ENCODE measurements at regions of chr9 and their contacts with region 1.

Region 1: GRCh38 chr9:111828193-111828592 is 33.5 kb upstream of the SHOC1 start:
- DNase-seq: peak in 4 of 5 donors; percentile 14 to 31 (median 24)
- H3K4me3 ChIP-seq: no peak overlapping the region
- H3K4me3 Mint-ChIP-seq: no peak overlapping the region
- H3K27ac ChIP-seq: no peak overlapping the region
- H3K27ac Mint-ChIP-seq: peak overlapping the region in 1 of 7 donors; percentile 32
- H3K4me1 ChIP-seq: no peaks in the 10 kb centered on the region
- H3K4me1 Mint-ChIP-seq: peaks cover 0 to 1% (median 0%) of the 10 kb centered on the region in 4 donors
- H3K27me3 ChIP-seq: no peaks in the 10 kb centered on the region
- H3K27me3 Mint-ChIP-seq: no peaks in the 10 kb centered on the region

Region 2: DNA sequence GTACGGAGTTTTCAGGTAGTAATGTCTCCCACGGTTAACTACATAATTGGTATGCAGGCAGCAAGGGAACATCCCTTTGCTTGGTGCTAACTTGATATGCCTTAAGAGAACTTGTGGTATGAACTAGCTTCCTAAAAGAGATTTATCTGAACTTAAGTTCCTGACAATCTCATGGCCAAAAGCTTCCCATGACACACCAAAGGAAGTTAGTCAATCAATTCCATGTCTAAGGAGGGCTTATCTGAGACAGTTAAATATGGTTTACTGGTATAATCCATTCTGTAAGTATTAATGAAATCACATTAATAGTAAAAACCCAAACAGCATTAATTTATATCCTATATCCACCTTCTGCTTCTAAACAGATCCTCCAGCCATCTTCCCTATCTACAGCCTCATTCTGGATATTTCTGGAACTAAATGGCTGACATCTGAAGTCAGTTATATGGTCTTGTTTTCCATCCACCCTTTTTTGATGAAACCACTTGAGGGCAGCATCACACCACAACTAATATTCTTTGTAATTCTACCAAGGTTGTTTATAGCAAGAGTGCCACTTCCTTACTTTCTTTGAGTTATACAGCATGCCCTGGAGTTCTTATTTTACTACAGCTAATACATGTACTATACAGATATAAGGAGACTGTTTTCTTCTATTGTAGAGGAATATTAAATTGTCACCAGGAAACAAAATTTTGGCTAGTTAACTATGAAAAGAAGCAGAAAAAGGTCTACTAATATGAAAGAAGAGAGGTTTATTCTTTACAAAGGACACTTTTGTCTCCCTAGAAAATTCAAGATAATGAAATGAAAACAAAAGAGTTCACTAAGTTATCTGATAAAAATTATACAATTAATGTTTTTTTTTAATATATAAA is 68.2 kb before region 1 on chr9:
- CTCF ChIA-PET with region 1: interaction called, 4 read pairs
- POLR2A ChIA-PET with region 1: no interaction called
- intact Hi-C with region 1: loop called (anchors 1 kb)
- DNase-seq: peak; percentile 56 to 70 (median 68)
- H3K4me3 ChIP-seq: no peak overlapping the region
- H3K4me3 Mint-ChIP-seq: no peak overlapping the region
- H3K27ac ChIP-seq: no peak overlapping the region
- H3K27ac Mint-ChIP-seq: no peak overlapping the region
- H3K4me1 ChIP-seq: no peaks in the 10 kb centered on the region
- H3K4me1 Mint-ChIP-seq: peaks cover 0 to 4% (median 2%) of the 10 kb centered on the region in 4 donors
- H3K27me3 ChIP-seq: no peaks in the 10 kb centered on the region
- H3K27me3 Mint-ChIP-seq: no peaks in the 10 kb centered on the region

Region 3: GRCh38 chr9:111897601-111898137 is 69.5 kb after region 1 on chr9:
- CTCF ChIA-PET with region 1: no interaction called
- POLR2A ChIA-PET with region 1: no interaction called
- intact Hi-C with region 1: no loop called
- DNase-seq: peak in 3 of 5 donors; percentile 15 to 29 (median 28)
- H3K4me3 ChIP-seq: peak overlapping the region; percentile 87 to 97
- H3K4me3 Mint-ChIP-seq: no peak overlapping the region
- H3K27ac ChIP-seq: peak overlapping the region; percentile 70
- H3K27ac Mint-ChIP-seq: no peak overlapping the region
- H3K4me1 ChIP-seq: peaks cover 58% of the 10 kb centered on the region
- H3K4me1 Mint-ChIP-seq: peaks cover 14 to 22% (median 21%) of the 10 kb centered on the region in 4 donors
- H3K27me3 ChIP-seq: no peaks in the 10 kb centered on the region
- H3K27me3 Mint-ChIP-seq: no peaks in the 10 kb centered on the region

Region 4: DNA sequence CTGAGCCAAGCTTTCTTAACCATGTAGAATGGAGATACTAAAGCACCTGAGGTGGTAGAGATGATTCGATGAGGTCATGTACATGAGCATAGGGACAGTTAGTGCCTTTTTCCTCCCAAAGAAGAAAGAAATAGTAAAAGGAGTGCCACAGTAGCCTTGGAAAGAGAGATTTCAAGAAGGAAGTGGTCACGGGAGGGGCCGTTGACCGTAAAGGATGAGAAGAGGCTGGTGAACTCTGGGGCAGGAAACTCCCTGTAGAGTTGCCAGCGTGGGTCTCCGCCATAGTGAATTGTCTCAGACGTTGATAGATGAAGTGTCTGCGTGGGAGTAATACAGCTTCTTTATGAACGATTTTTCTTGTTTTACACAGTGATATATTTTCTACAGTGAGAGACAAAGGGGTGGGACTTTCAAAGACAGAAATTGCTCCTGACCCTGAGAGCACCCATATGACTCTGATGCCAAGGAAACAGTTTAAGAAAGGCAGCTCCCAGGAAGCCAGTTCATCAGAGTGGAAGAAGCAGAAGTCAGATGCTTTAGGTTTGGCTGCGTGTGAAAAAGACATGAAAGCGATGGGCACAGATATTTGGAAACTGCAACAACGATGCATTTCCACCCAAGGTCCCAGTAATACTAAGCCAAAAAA is 109.7 kb after region 1 on chr9:
- CTCF ChIA-PET with region 1: no interaction called
- POLR2A ChIA-PET with region 1: no interaction called
- intact Hi-C with region 1: no loop called
- DNase-seq: peak; percentile 56 to 79 (median 60)
- H3K4me3 ChIP-seq: peak overlapping the region in 1 of 2 donors; percentile 42
- H3K4me3 Mint-ChIP-seq: peak overlapping the region; percentile 57 to 93 (median 82)
- H3K27ac ChIP-seq: peak overlapping the region; percentile 39
- H3K27ac Mint-ChIP-seq: peak overlapping the region; percentile 74 to 97 (median 96)
- H3K4me1 ChIP-seq: peaks cover 31% of the 10 kb centered on the region
- H3K4me1 Mint-ChIP-seq: peaks cover 25 to 41% (median 33%) of the 10 kb centered on the region in 4 donors
- H3K27me3 ChIP-seq: no peaks in the 10 kb centered on the region
- H3K27me3 Mint-ChIP-seq: no peaks in the 10 kb centered on the region

Region 5: GRCh38 chr9:111975709-111976108 is 147.5 kb after region 1 on chr9:
- CTCF ChIA-PET with region 1: interaction called, 3 read pairs
- POLR2A ChIA-PET with region 1: no interaction called
- intact Hi-C with region 1: loop called (anchors 1 kb)
- DNase-seq: no peak
- H3K4me3 ChIP-seq: no peak overlapping the region
- H3K4me3 Mint-ChIP-seq: no peak overlapping the region
- H3K27ac ChIP-seq: no peak overlapping the region
- H3K27ac Mint-ChIP-seq: peak overlapping the region in 1 of 7 donors; percentile 52
- H3K4me1 ChIP-seq: no peaks in the 10 kb centered on the region
- H3K4me1 Mint-ChIP-seq: peaks cover 0 to 10% (median 6%) of the 10 kb centered on the region in 4 donors
- H3K27me3 ChIP-seq: no peaks in the 10 kb centered on the region
- H3K27me3 Mint-ChIP-seq: no peaks in the 10 kb centered on the region

Measured in CD4-positive, alpha-beta memory T cell (primary cell).